Activated CD4-positive, alpha-beta T cell treated with anti-CD3 and anti-CD28 coated beads, Interleukin-2, amount 10 ng/mL, durations not matched to agents 7 days and 5 days (primary cell): ENCODE measurements at regions of chr1 and their contacts with region 1.

Region 1: DNA sequence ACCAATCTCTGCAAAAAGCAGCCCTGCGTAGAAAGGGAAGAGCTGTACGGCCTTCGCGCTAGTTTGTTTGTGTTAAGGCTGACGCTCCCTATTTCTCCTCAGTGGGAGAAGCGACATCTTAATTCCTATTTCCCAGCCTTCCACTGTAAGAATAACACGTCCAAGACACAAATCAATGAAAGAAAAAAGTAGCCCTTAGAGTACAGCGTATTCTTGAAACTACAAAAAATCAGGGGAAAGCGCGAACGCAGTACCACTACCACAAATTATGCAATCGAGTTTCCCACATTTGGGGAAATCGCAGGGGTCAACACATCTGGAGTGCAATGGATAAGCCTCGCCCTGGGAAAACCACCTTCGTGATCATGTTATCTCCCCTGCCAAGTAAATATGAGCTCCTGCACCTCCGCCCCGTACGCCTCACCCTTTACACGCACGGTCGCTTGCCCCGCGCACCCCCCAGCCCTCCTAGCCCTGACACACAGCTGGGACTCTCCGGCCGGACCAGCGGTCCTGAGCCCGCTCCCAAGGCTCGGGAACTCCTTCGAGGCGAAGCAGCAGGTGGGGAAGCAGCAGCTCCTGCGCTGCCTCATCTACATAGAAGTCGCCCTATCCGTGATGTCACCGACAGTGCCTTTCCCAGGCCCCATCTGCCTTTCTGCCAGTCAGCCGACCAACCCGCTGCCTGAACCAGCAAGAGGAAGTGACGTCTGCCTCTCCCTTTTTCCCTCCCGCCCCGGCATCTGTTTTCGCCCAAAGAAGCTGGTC is 94.7 kb downstream of the PPIAL4G start:
- DNase-seq: peak; percentile 91
- H3K4me3 Mint-ChIP-seq: peak overlapping the region; percentile 83
- H3K27ac Mint-ChIP-seq: peak overlapping the region; percentile 98
- H3K4me1 Mint-ChIP-seq: peaks cover 48% of the 10 kb centered on the region
- H3K27me3 Mint-ChIP-seq: no peaks in the 10 kb centered on the region

Region 2: DNA sequence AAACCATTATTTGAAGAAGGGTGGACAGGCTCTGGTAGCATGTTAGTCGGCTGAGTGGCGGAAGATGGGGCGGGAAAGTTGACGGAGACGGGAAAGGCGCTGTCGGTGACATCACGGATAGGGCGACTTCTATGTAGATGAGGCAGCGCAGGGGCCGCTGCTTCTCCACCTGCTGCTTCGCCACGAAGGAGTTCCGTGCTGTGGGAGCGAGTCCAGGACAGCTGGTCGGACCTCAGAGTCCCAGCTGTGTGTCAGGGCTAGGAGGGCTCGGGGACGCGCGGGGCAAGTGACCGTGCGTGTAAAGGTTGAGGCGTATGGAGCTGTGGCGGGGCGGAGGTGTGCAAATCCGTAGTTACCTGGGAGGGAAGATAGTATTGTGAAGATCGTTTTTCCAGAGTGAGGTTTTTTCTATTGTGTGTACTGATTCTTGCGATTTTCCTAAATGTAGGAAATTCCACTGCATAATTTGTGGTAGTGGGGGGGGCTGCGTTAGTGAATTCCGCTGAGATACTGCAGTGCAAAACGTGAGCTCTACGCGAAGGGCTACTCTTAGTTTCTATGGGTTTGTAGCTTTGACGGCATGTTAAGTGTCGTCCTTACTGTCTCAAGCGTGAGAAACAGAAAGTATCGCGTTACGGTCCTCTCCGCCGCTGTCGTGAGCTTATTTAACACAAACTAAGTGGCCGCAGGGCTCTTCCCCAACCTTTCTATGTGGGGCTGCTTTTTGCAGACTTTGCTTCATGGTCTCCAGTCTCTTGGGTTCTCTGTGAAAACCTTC is 125.1 kb before region 1 on chr1:
- CTCF ChIA-PET with region 1: no interaction called
- POLR2A ChIA-PET with region 1: interaction called, 11 read pairs
- DNase-seq: peak; percentile 68
- H3K4me3 Mint-ChIP-seq: peak overlapping the region; percentile 84
- H3K27ac Mint-ChIP-seq: peak overlapping the region; percentile 89
- H3K4me1 Mint-ChIP-seq: peaks cover 20% of the 10 kb centered on the region
- H3K27me3 Mint-ChIP-seq: peaks cover 26% of the 10 kb centered on the region